ENCODE measurements at regions of chr11 and their contacts with region 1.

Region 1: GRCh38 chr11:3037040-3037944 is 19.9 kb downstream of the CARS1 start:
- DNase-seq: peak; percentile 86 to 90
- H3K4me3 ChIP-seq: no peak overlapping the region
- H3K27ac ChIP-seq: no peak overlapping the region
- H3K4me1 ChIP-seq: peaks cover 0 to 6% (median under 1%) of the 10 kb centered on the region in 4 donors
- H3K27me3 ChIP-seq: no peaks in the 10 kb centered on the region
- CTCF ChIP-seq: peak; percentile 70 to 81

Region 2: DNA sequence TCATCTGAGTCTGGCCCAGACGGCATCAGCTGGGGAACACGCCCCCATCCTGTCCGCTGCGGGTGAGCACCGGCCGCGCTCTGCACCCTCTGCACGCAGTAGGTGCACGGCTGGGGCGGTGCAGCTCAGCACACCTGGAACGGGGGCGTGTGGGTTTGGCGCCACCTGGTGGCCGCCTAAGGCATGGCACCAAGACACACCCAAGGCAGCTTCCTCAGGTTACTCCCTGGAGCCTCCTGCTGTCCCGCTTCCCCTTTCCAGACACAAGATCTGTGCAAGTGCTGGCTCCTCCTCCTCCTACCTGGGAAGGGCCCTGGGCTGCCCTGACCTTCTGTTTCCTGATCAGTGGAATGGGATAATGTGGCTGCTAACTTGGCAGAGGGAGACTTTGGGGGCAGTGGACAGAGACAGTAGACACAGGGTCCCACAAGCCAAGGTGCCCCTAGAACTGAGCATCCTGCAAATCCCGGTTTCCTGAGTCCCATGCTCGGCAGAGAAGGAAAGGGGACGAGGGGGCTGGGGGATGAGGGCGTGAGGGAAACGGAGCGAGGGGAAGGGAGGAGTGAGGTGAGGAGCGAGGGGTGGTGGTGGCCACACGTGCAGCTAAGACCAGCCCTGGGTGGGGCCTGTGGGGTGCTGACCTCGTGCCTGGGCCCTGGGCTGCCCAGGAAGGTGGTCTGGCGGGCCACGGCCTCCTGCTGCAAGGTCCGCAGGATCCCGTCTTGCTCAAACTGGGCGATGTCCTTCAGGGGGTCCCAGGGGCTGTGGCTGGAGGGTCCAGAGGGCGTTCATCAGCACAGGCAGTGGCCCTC is 54.7 kb after region 1 on chr11:
- intact Hi-C with region 1: loop called (anchors 2 kb)
- DNase-seq: no peak
- H3K4me3 ChIP-seq: no peak overlapping the region
- H3K27ac ChIP-seq: no peak overlapping the region
- H3K4me1 ChIP-seq: peaks cover 0 to 11% (median 6%) of the 10 kb centered on the region in 4 donors
- H3K27me3 ChIP-seq: no peaks in the 10 kb centered on the region
- CTCF ChIP-seq: peak; percentile 97 to 100

Measured in tibial artery (tissue), 4 donors.